ENCODE measurements at regions of chr15 and their contacts with region 1.

Region 1: DNA sequence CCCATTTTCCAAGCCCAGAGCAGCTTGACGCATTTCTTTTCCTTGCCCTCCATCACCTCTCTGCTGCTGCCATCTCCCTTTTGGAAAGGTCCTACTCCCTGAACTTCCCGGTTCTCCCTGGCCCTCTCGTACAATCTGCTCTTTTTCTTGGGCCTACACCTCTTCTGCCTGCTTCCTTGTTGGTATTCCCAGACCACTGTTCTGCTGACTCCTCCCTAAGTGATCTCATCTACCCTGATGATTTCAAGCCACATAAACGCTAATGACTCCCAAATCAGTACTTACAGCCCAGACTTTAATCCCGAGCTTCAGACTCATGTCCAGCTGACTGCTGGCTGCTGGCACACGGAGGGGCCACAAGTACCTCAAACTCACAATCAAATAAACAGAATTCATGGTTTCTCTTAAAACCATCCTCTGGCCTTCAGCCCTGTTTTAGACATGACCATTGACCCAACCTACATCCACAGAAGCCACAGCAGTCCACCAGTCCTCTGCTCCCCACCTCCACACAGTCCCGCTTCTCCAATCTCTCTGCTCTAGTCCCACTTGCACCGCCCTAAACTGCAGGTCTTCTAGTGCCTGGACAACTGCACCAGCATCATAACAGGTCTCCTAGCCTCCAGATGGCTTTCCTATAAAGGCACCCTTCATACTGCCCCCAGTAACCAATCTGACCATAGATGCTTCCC is 57.6 kb downstream of the AAGAB start:
- DNase-seq: no peak
- ATAC-seq: no peak
- H3K4me3 Mint-ChIP-seq: no peak overlapping the region
- H3K27ac Mint-ChIP-seq: peak overlapping the region; percentile 18
- H3K4me1 Mint-ChIP-seq: peaks cover 10% of the 10 kb centered on the region
- H3K27me3 Mint-ChIP-seq: no peaks in the 10 kb centered on the region

Region 2: DNA sequence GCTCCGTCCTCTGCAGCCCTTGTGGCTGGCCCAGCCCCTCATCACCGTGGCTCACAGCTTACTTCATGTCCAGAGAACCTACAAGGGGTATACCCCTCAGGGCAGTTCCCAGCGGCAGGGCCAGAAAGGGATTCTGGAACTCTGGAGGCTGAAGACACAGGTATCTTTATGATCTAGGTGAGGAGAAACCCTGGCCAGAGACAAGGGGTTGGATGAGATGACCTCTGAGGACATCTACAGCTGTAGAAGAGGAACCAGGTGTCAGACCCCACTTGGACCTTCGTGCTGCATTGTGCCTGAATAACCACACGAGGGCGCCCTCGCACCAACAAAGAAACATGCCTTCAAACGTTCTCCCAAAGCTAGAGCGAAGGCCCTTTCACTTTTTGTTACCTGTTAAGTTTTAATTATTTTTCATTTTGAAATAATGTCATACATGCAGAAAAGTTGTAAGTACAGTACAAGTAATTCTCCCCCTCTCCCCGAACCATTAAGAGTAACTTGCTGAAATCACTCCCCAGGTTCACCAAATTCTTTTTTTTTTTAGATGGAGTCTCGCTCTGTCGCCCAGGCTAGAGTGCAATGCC is 250.1 kb before region 1 on chr15:
- CTCF ChIA-PET with region 1: interaction called, 4 read pairs
- POLR2A ChIA-PET with region 1: no interaction called
- intact Hi-C with region 1: loop called in 1 of 2 experiments (anchors 10 kb)
- DNase-seq: peak; percentile 85
- ATAC-seq: peak; percentile 70
- H3K4me3 Mint-ChIP-seq: no peak overlapping the region
- H3K27ac Mint-ChIP-seq: no peak overlapping the region
- H3K4me1 Mint-ChIP-seq: peaks cover 3% of the 10 kb centered on the region
- H3K27me3 Mint-ChIP-seq: no peaks in the 10 kb centered on the region

Region 3: GRCh38 chr15:66957431-66957720 is 239.4 kb before region 1 on chr15:
- CTCF ChIA-PET with region 1: no interaction called
- POLR2A ChIA-PET with region 1: no interaction called
- intact Hi-C with region 1: no loop called
- DNase-seq: no peak
- ATAC-seq: no peak
- H3K4me3 Mint-ChIP-seq: no peak overlapping the region
- H3K27ac Mint-ChIP-seq: no peak overlapping the region
- H3K4me1 Mint-ChIP-seq: peaks cover 2% of the 10 kb centered on the region
- H3K27me3 Mint-ChIP-seq: peaks cover 2% of the 10 kb centered on the region